ENCODE measurements at regions of chr11 and their contacts with region 1.

Region 1: DNA sequence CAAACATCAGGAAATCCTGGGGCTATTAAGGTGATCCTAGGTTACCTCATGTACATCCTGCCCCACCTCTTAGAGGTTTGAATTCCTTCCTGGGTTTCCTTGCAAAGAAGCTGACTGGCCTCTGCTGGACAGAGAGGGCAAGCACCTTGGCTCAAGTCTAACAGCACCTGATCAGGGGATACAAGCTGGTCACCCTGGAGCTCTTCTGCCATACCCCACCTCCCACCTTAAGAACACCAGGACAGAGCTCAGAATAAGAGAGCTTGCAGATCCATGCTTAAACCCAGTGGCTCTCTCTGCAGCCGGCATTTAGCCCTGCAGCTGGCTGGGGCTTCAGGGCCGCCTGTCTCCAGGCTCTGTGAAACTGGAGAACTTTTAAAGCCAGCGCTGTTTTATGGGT is 386.6 kb upstream of the NARS2 start:
- DNase-seq: peak; percentile 96
- ATAC-seq: peak; percentile 81
- H3K4me3 ChIP-seq: peak overlapping the region; percentile 68
- H3K27ac ChIP-seq: peak overlapping the region; percentile 94
- H3K4me1 ChIP-seq: peaks cover 65% of the 10 kb centered on the region
- H3K27me3 ChIP-seq: no peaks in the 10 kb centered on the region
- CTCF ChIP-seq: peak; percentile 99

Region 2: DNA sequence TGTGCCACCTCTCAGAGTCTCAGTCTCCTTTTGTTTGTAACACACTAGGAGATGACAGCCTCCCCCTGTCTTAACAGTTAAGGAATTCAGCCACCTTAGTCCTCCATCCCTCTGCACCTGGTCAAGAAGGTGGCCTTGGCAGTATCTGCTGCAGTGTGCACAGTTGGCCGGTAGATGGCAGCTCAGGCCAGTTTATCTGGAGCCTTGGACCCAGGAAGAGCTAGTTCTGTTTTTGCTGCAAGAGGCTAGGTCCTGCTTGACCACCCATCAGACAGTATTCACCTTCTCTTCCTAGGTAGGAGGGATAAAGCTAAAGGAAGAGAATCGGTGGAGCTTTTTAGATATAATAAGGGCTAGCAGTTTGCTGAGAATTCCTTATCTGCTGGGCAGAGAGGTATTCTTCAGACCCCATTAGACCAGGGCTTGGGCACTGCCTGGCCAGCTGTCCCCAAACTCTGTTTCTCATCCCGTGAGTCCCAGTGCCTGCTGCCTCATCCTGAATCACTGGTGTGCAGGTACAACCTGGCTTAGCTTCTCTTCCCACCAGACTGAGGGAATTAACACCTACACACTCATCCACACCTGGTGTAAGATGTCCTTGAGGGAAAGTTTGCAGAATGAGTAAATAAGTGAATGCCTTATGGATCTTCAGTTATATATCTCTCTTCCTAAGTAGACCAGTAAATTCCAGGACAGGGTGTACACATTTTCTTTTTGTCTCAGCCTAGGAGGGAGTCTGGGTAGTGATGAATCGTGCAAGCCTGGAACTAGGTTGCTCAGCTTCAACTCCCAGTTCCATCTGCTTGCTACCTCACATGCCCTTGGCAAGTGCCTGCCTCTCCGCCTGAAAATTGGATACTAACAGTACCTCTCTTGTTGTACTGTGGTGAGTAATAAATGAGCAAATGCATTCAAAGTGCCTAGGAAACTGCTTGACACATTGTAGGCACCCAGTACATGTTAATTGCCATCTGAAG is 315.7 kb before region 1 on chr11:
- CTCF ChIA-PET with region 1: interaction called, 74 read pairs
- POLR2A ChIA-PET with region 1: no interaction called
- intact Hi-C with region 1: loop called (anchors 1 kb)
- DNase-seq: peak; percentile 96
- ATAC-seq: peak; percentile 73
- H3K4me3 ChIP-seq: peak overlapping the region; percentile 54
- H3K27ac ChIP-seq: peak overlapping the region; percentile 78
- H3K4me1 ChIP-seq: peaks cover 22% of the 10 kb centered on the region
- H3K27me3 ChIP-seq: no peaks in the 10 kb centered on the region
- CTCF ChIP-seq: peak; percentile 99

Region 3: GRCh38 chr11:78798660-78799059 is 162.6 kb before region 1 on chr11:
- CTCF ChIA-PET with region 1: interaction called, 20 read pairs
- POLR2A ChIA-PET with region 1: interaction called, 8 read pairs
- intact Hi-C with region 1: loop called (anchors 1 kb)
- DNase-seq: peak; percentile 85
- ATAC-seq: peak; percentile 1; the same call in 1 of the 2 replicates
- H3K4me3 ChIP-seq: no peak overlapping the region
- H3K27ac ChIP-seq: peak overlapping the region; percentile 96
- H3K4me1 ChIP-seq: peaks cover 83% of the 10 kb centered on the region
- H3K27me3 ChIP-seq: no peaks in the 10 kb centered on the region
- CTCF ChIP-seq: peak; percentile 96

Region 4: GRCh38 chr11:78840200-78840599 is 121.0 kb before region 1 on chr11:
- CTCF ChIA-PET with region 1: no interaction called
- POLR2A ChIA-PET with region 1: no interaction called
- intact Hi-C with region 1: loop called (anchors 1 kb)
- DNase-seq: no peak
- ATAC-seq: no peak
- H3K4me3 ChIP-seq: no peak overlapping the region
- H3K27ac ChIP-seq: no peak overlapping the region
- H3K4me1 ChIP-seq: peaks cover 31% of the 10 kb centered on the region
- H3K27me3 ChIP-seq: no peaks in the 10 kb centered on the region
- CTCF ChIP-seq: no peak

Region 5: GRCh38 chr11:78982473-78982872 is 21.2 kb after region 1 on chr11:
- CTCF ChIA-PET with region 1: no interaction called
- POLR2A ChIA-PET with region 1: no interaction called
- intact Hi-C with region 1: no loop called
- DNase-seq: no peak
- ATAC-seq: no peak
- H3K4me3 ChIP-seq: no peak overlapping the region
- H3K27ac ChIP-seq: no peak overlapping the region
- H3K4me1 ChIP-seq: no peaks in the 10 kb centered on the region
- H3K27me3 ChIP-seq: no peaks in the 10 kb centered on the region
- CTCF ChIP-seq: no peak

Region 6: DNA sequence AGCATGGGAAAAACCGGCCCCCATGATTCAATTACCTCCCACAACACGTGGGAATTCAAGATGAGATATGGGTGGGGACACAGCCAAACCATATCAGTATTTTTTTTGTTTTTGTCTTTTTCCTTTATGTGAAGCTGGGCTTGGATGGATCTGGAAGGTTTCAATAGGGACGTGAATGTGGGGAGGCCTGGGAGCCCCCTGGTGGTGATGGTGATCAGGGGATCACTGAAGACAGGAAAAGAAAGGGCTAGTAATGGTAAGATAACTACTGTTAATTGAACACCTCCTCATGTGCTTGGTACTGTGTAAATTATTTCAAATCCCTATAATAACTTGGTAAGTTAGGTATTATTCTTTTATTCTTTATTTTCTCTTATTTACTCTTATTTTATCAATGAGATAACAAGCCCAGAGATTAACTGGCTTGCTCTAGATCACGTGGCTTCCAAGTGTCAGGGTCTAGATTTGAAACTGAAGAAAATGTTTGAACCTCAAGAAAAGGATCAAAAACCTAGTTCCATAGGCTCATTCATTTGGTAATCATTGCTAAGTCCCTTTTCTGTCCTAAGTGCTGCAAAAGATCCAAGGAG is 115.4 kb after region 1 on chr11:
- CTCF ChIA-PET with region 1: interaction called, 3 read pairs
- POLR2A ChIA-PET with region 1: no interaction called
- intact Hi-C with region 1: loop called (anchors 1 kb)
- DNase-seq: peak; percentile 71
- ATAC-seq: peak; percentile 82
- H3K4me3 ChIP-seq: no peak overlapping the region
- H3K27ac ChIP-seq: no peak overlapping the region
- H3K4me1 ChIP-seq: no peaks in the 10 kb centered on the region
- H3K27me3 ChIP-seq: no peaks in the 10 kb centered on the region
- CTCF ChIP-seq: peak; percentile 81

Region 7: DNA sequence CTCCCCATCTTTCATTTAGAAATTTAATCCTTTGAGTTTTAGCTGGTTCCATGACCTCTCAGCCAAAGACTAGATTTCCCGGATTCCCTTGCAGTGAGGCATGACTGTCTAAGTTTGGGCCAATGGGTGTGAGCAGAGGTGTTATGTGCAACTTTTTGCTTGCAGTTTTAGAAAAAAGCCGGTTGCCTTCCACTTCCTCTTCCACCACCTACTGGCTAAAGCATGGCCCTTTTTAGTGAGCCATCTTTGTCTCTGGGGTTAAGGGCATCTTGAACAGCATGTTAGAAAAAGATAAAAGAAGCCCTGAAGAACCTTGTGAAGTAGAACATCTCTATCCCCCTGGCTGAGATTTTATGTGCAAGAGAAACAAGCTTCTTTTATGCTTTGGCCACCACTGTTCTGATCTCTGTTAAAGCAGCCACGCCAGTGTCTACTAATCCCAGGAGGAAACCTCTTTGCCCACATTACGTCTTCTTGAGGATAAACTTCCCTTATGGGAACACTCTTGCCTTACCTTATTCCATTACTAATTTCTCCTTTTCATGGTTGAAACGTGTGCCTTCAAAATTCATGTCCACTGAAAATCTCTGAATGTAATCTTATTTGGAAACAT is 199.7 kb after region 1 on chr11:
- CTCF ChIA-PET with region 1: no interaction called
- POLR2A ChIA-PET with region 1: no interaction called
- intact Hi-C with region 1: loop called (anchors 1 kb)
- DNase-seq: peak; percentile 81
- ATAC-seq: peak; percentile 77
- H3K4me3 ChIP-seq: no peak overlapping the region
- H3K27ac ChIP-seq: no peak overlapping the region
- H3K4me1 ChIP-seq: peaks cover 6% of the 10 kb centered on the region
- H3K27me3 ChIP-seq: peaks cover 3% of the 10 kb centered on the region; the same call in 1 of the 2 replicates
- CTCF ChIP-seq: peak; percentile 85